ENCODE measurements at regions of chr2 and their contacts with region 1.

Region 1: GRCh38 chr2:97995734-97996624 is at the start of gene TMEM131:
- DNase-seq: peak; percentile 58 to 94
- H3K4me3 ChIP-seq: peak within 1 kb of the TSS; percentile 68 to 91
- H3K27ac ChIP-seq: peak within 1 kb of the TSS; percentile 94 to 97
- H3K4me1 ChIP-seq: peaks cover 0 to 17% of the 10 kb centered on the region in 2 donors
- H3K27me3 ChIP-seq: no peaks in the 10 kb centered on the region
- CTCF ChIP-seq: no peak
- total RNA-seq, gene TMEM131: 20.0 TPM

Region 2: DNA sequence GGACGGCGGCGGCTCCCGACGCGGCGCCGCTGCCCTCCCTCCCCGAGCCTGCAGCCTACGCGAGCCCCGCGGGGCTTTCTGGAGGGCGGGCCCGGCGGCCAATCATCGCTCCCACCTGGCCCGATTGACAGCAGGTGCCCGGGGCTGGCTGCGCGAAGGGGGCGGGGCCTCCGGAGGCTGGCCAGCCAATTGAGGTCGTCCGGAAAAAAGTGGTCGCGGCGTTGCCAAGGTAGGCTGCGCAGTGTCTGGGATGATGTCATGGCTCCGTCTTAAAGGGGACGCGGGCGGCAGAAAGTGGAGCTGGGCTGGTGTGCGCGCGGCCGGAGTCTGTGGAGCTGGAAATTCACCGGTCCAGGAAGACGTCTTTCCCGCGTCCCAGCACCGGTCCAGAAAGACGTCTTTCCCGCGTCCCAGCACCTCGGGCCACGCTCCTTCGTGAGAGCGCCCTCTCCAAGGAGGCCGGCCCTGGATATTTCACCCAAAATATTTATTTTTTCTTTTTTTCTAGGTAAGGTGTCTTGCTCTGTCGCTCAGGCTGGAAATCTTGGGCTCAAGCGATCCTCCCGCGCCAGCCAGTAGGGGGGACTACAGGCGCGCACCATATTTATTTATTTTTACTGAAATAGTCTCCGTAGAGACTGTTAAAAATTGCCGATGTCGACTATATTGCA is 331.9 kb before region 1 on chr2 and contains the start of gene ACTR1B:
- intact Hi-C with region 1: loop called (anchors 5 kb)
- DNase-seq: peak; percentile 93 to 99
- H3K4me3 ChIP-seq: peak within 1 kb of the TSS; percentile 78 to 96
- H3K27ac ChIP-seq: peak within 1 kb of the TSS; percentile 94 to 95
- H3K4me1 ChIP-seq: peaks cover 13 to 24% of the 10 kb centered on the region in 2 donors
- H3K27me3 ChIP-seq: no peaks in the 10 kb centered on the region
- CTCF ChIP-seq: peak; percentile 57 to 68 (median 61)
- total RNA-seq, gene ACTR1B: 125 TPM

Region 3: GRCh38 chr2:97849881-97850528 is 146.0 kb before region 1 on chr2:
- intact Hi-C with region 1: no loop called
- DNase-seq: no peak
- H3K4me3 ChIP-seq: no peak overlapping the region
- H3K27ac ChIP-seq: no peak overlapping the region
- H3K4me1 ChIP-seq: no peaks in the 10 kb centered on the region
- H3K27me3 ChIP-seq: no peaks in the 10 kb centered on the region
- CTCF ChIP-seq: no peak

Region 4: DNA sequence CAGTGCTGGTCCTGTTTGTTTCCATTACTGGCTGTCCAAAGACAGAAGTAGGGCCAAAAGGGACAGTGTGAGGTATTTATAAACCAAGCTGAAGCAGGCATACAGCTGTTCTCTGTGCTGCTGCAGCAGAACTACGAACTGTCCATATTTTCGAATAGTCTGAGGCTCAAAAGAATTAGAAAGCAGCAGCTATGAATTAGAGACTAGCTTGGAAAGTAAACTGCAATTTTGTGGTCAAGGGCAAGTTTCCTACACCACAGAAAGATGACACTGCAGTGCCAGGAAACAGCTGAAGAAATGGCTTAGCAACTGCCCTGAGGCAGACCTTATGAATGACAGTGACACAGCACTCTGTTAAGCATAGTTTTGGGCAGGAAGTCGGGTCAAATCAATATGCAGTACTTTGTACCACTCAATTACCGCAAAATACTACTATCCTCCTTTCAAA is 125.6 kb before region 1 on chr2:
- intact Hi-C with region 1: loop called (anchors 5 kb)
- DNase-seq: no peak
- H3K4me3 ChIP-seq: no peak overlapping the region
- H3K27ac ChIP-seq: peak overlapping the region; percentile 63 to 70
- H3K4me1 ChIP-seq: peaks cover 8 to 31% of the 10 kb centered on the region in 2 donors
- H3K27me3 ChIP-seq: no peaks in the 10 kb centered on the region
- CTCF ChIP-seq: no peak

Region 5: DNA sequence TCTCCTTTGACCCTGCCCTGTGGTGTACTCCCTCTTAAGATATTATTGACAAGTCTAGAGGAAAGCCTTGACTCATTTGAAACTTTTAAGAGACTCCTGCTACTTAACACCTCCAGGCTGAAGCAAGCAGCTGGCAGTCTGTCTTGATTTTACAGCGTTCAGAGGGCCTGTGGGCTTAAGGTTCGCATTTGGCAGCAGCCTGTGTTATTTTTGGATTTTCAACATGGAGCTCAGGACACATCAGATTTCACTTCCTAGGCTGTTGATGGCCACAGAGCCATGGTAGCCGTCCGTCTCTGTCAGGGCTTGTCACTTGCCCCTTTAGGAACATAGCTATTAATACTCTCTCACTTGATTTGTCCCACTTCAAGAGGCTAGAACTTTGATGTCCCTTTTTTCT is 164.6 kb after region 1 on chr2:
- intact Hi-C with region 1: loop called (anchors 5 kb)
- DNase-seq: peak in 1 of 2 donors; percentile 69
- H3K4me3 ChIP-seq: no peak overlapping the region
- H3K27ac ChIP-seq: peak overlapping the region; percentile 79 to 83
- H3K4me1 ChIP-seq: peaks cover 31 to 44% of the 10 kb centered on the region in 2 donors
- H3K27me3 ChIP-seq: no peaks in the 10 kb centered on the region
- CTCF ChIP-seq: no peak

Measured in ascending aorta (tissue), 2 donors.